Left ventricle myocardium superior (tissue), 1 donor: ENCODE measurements at regions of chr7 and their contacts with region 1.

Region 1: GRCh38 chr7:774161-775109 is 47.4 kb upstream of the PRKAR1B start:
- DNase-seq: peak; percentile 83
- ATAC-seq: peak; percentile 58

Region 2: DNA sequence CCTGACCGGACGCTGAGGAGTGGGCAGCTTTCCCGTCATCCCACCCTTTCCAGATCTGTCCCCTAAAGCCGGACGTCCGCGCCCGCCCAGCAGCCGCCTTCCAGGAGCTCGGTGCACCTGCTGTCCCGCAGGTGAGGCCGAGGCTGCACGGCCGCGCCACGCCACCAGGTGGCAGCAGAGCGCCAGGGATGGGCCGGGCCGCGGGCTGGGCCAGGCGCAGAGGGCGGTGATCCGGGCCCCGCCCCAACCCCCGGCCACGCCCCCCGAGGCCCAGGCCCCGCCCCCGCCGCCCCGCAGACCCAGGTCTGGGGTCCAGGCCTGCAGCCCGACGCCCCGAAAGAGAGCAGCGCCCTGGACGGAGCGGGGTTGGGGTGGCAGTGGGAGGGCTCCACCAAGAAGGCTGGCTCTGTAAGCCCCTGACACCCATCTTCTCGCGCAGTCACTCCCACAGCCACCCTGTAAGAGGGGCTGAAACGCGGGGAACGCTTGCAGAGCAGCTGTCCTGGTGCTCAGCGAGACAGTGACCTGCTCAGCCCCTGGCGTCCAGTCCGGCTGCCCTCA is 452.2 kb before region 1 on chr7:
- intact Hi-C with region 1: loop called (anchors 10 kb)
- DNase-seq: peak; percentile 85
- ATAC-seq: peak; percentile 89

Region 3: GRCh38 chr7:568031-568951 is 206.1 kb before region 1 on chr7:
- intact Hi-C with region 1: no loop called
- DNase-seq: peak; percentile 68
- ATAC-seq: peak; percentile 74